Activated B cell treated with CpG ODN at 0.5 μM for 24 hours (primary cell): ENCODE measurements at regions of chr13 and their contacts with region 1.

Region 1: GRCh38 chr13:30132623-30133553 is 174.5 kb downstream of the KATNAL1 start:
- DNase-seq: peak; percentile 90
- ATAC-seq: peak; percentile 100
- H3K4me3 Mint-ChIP-seq: no peak overlapping the region
- H3K27ac Mint-ChIP-seq: no peak overlapping the region
- H3K4me1 Mint-ChIP-seq: peaks cover 3% of the 10 kb centered on the region
- H3K27me3 Mint-ChIP-seq: no peaks in the 10 kb centered on the region
- CTCF ChIP-seq: peak; percentile 69

Region 2: GRCh38 chr13:29892151-29892550 is 240.7 kb before region 1 on chr13:
- CTCF ChIA-PET with region 1: no interaction called
- POLR2A ChIA-PET with region 1: no interaction called
- intact Hi-C with region 1: no loop called
- DNase-seq: no peak
- ATAC-seq: no peak
- H3K4me3 Mint-ChIP-seq: no peak overlapping the region
- H3K27ac Mint-ChIP-seq: no peak overlapping the region
- H3K4me1 Mint-ChIP-seq: no peaks in the 10 kb centered on the region
- H3K27me3 Mint-ChIP-seq: peaks cover 3% of the 10 kb centered on the region
- CTCF ChIP-seq: no peak

Region 3: DNA sequence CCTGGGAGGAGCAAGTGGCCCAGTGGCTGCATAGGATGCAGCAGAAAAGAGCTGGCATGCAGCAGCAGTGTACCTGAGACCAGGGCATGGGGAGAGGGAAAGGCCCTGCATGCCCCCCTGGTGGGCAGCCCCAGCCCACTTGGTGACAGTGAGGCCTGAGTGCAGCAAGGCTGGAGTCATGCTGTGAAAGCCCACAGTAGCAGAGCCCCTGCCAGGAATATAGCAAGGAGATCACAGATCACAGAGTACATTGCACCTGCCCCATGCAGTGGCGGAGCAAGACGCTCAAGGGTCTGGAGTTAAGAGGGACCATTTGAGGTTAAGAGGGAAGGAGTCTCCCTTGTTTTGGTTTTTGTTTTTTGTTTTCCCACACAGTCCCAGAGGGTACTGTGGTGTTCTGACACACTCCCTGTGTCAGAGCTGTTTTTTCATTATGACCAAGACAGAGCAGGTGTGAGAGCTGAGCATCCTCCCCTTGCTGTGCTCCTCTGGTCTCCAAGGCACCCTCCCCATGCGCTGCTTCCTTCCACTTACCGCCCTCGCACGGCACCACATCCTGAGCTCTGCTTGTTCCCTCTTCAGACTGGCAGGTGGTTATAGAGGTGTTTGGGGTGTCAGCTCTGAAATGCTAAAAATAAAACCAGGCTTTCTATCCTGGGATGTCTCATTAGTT is 197.4 kb before region 1 on chr13:
- CTCF ChIA-PET with region 1: no interaction called
- POLR2A ChIA-PET with region 1: no interaction called
- intact Hi-C with region 1: no loop called
- DNase-seq: no peak
- ATAC-seq: peak; percentile 85
- H3K4me3 Mint-ChIP-seq: peak overlapping the region; percentile 55
- H3K27ac Mint-ChIP-seq: no peak overlapping the region
- H3K4me1 Mint-ChIP-seq: peaks cover 27% of the 10 kb centered on the region
- H3K27me3 Mint-ChIP-seq: peaks cover 1% of the 10 kb centered on the region
- CTCF ChIP-seq: no peak

Region 4: GRCh38 chr13:30103132-30103840 is 29.6 kb before region 1 on chr13:
- CTCF ChIA-PET with region 1: no interaction called
- POLR2A ChIA-PET with region 1: no interaction called
- intact Hi-C with region 1: no loop called
- DNase-seq: no peak
- ATAC-seq: no peak
- H3K4me3 Mint-ChIP-seq: no peak overlapping the region
- H3K27ac Mint-ChIP-seq: no peak overlapping the region
- H3K4me1 Mint-ChIP-seq: no peaks in the 10 kb centered on the region
- H3K27me3 Mint-ChIP-seq: peaks cover 2% of the 10 kb centered on the region
- CTCF ChIP-seq: no peak

Region 5: DNA sequence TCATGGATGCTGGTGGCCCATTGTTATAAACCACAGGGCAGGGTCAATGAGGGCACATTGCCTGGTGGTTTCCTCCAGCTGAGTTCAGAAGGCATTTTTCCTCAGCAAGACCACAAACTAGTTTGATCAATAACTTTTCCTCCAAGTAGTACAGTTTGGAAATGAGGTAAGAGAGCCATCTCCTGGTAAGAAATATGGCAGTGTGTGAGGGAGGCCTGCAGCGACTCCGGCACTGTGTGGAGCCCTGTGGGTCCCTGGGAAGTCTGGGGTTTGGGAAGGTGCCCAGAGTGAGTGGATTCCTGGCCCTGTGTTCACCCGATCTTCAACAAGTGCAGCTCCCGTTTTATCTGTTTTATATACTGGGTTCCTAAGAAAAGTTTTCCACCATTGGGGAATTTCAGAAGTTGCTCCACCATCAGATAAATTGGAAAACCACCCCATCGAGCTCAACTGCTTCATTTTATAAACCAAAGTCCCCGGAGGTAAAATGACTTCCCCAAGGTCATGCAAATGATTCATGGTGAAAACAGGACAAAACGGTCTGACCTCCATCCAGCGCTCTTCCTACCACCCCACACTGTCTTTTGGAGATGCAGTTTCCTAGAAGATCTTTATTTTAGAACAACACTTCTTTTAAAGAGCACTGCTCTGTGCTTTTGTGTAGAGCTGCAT is 26.0 kb after region 1 on chr13:
- CTCF ChIA-PET with region 1: interaction called, 6 read pairs
- POLR2A ChIA-PET with region 1: interaction called, 3 read pairs
- intact Hi-C with region 1: loop called (anchors 1 kb)
- DNase-seq: no peak
- ATAC-seq: no peak
- H3K4me3 Mint-ChIP-seq: no peak overlapping the region
- H3K27ac Mint-ChIP-seq: no peak overlapping the region
- H3K4me1 Mint-ChIP-seq: peaks cover 47% of the 10 kb centered on the region
- H3K27me3 Mint-ChIP-seq: peaks cover 2% of the 10 kb centered on the region
- CTCF ChIP-seq: no peak

Region 6: GRCh38 chr13:30355384-30355699 is 222.5 kb after region 1 on chr13:
- CTCF ChIA-PET with region 1: interaction called, 12 read pairs
- POLR2A ChIA-PET with region 1: no interaction called
- intact Hi-C with region 1: loop called (anchors 2 kb)
- DNase-seq: peak; percentile 61
- ATAC-seq: peak; percentile 100
- H3K4me3 Mint-ChIP-seq: peak overlapping the region; percentile 45
- H3K27ac Mint-ChIP-seq: peak overlapping the region; percentile 77
- H3K4me1 Mint-ChIP-seq: peaks cover 32% of the 10 kb centered on the region
- H3K27me3 Mint-ChIP-seq: no peaks in the 10 kb centered on the region
- CTCF ChIP-seq: no peak

Region 7: DNA sequence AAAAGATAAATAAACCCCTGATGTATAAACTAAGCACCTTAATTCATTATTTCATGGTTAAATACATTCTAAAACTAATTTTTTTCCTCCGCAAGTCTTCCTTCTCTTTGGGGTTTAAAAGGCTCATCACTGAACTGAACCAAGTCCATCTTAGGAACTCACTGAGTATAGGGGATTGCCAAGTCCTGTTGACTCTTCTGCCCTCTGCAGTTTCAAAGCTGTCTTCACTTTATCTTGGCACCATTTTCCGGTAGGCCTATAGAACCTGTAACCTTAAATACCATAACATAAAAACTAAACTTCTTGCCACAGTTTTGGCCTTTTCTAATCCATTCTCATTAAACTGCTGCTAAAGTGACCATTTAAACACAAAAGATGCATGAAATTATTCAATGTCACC is 418.3 kb after region 1 on chr13:
- CTCF ChIA-PET with region 1: interaction called, 20 read pairs
- POLR2A ChIA-PET with region 1: no interaction called
- intact Hi-C with region 1: loop called (anchors 1 kb)
- DNase-seq: no peak
- ATAC-seq: peak; percentile 85
- H3K4me3 Mint-ChIP-seq: no peak overlapping the region
- H3K27ac Mint-ChIP-seq: no peak overlapping the region
- H3K4me1 Mint-ChIP-seq: peaks cover 11% of the 10 kb centered on the region
- H3K27me3 Mint-ChIP-seq: no peaks in the 10 kb centered on the region
- CTCF ChIP-seq: no peak

Region 8: DNA sequence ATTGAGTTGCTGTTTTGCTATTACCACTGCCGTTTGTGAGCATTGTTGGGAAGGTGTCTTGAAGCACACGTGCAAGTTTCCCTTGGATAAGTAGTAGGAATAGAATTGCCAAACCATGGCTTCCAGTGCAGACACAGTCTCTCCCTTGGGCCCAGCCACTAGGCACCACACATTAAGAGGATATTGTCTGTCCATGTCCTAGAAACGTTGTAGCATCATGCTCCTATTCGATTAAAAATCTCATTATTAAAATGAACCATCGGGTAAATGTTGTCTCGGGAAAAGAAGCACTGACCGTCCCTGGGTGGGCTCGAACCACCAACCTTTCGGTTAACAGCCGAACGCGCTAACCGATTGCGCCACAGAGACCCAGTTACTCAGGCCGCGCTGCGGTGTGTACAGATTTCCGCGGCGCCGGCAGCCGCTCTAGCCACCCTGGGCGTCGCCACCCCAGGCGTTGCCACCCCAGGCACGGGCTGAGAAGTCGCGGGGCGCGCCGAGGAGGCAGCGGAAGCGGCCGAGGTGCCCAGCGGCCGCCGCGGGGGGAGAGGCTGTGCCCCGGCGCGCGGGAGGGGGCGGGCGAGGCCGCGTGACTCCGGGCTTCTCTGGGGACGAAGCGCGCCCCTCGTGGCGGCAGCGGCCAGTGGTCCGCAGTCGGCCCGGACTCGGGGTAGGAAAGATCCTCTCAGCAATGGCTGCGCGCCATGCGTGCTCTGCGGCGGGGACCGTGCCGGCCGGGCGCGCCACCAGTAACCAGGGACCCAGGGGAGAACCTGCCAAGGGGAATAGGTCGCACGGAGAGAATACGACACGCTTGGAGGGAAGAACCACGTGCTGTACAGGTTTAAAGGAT is 541.0 kb after region 1 on chr13:
- CTCF ChIA-PET with region 1: no interaction called
- POLR2A ChIA-PET with region 1: no interaction called
- intact Hi-C with region 1: loop called (anchors 1 kb)
- DNase-seq: peak; percentile 94
- ATAC-seq: peak; percentile 93
- H3K4me3 Mint-ChIP-seq: peak overlapping the region; percentile 92
- H3K27ac Mint-ChIP-seq: peak overlapping the region; percentile 92
- H3K4me1 Mint-ChIP-seq: peaks cover 29% of the 10 kb centered on the region
- H3K27me3 Mint-ChIP-seq: no peaks in the 10 kb centered on the region
- CTCF ChIP-seq: no peak

Region 9: DNA sequence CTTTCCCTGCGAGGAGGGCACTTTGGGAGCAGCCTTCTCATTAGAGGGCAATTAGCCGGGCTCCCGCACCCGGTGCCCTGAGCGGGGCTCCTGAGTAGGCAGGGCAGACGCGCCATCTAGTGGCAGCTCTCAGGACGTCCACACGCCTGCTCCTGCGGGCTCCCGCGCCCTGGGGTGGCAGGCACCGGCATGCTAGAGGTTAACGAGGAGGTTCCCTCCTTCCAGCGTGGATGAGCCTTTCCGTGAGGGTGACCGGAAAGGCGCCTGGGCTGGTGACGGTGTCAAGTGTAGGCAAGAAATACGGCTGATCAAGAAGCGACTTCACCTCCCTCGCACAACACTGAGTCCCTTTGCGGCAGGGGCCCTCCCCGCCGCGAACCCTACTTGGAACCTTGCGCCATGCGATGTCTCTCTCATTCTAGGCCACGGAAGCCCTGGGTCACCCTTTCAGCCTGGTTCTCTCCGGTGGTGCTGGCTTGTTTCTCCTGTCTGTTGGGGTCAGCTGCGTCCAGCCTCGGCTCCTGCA is 670.1 kb after region 1 on chr13:
- CTCF ChIA-PET with region 1: interaction called, 15 read pairs
- POLR2A ChIA-PET with region 1: no interaction called
- intact Hi-C with region 1: loop called (anchors 1 kb)
- DNase-seq: peak; percentile 73
- ATAC-seq: peak; percentile 98
- H3K4me3 Mint-ChIP-seq: peak overlapping the region; percentile 73
- H3K27ac Mint-ChIP-seq: no peak overlapping the region
- H3K4me1 Mint-ChIP-seq: peaks cover 11% of the 10 kb centered on the region
- H3K27me3 Mint-ChIP-seq: no peaks in the 10 kb centered on the region
- CTCF ChIP-seq: peak; percentile 90